Activated B cell treated with CpG ODN at 0.5 μM for 24 hours (primary cell): ENCODE measurements at regions of chr7 and their contacts with region 1.

Region 1: DNA sequence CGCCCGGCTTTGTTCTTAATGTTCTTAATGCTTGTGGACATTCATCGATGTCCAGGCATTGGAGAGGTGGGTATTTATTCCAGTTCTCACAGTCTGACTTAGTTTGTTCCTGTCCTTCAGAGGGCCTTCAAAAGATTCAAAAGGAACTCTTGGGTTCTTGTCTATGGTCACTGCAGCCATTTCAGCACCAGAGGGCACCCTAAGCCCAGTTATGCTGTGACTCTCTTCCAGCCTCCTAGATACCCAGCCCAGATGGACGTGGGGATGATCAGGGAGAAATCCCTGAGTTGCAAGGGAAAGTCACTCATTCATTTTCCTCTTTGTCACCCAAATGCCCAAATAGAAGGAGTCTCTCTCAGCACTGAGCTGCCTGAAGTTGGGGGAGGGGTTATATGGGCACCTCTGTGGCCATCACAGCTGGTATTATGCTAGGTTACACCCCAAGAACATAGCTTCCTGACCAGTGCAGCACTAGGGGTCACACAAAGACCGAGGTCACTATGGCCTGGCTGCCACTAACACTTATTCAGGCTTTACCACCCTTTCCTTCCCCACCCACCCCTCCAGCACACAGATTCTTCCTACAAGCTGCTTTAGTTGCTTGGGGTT is 26.5 kb upstream of the CCDC126 start:
- DNase-seq: peak; percentile 53
- ATAC-seq: peak; percentile 89
- H3K4me3 Mint-ChIP-seq: no peak overlapping the region
- H3K27ac Mint-ChIP-seq: no peak overlapping the region
- H3K4me1 Mint-ChIP-seq: no peaks in the 10 kb centered on the region
- H3K27me3 Mint-ChIP-seq: peaks cover 14% of the 10 kb centered on the region
- CTCF ChIP-seq: peak; percentile 29

Region 2: DNA sequence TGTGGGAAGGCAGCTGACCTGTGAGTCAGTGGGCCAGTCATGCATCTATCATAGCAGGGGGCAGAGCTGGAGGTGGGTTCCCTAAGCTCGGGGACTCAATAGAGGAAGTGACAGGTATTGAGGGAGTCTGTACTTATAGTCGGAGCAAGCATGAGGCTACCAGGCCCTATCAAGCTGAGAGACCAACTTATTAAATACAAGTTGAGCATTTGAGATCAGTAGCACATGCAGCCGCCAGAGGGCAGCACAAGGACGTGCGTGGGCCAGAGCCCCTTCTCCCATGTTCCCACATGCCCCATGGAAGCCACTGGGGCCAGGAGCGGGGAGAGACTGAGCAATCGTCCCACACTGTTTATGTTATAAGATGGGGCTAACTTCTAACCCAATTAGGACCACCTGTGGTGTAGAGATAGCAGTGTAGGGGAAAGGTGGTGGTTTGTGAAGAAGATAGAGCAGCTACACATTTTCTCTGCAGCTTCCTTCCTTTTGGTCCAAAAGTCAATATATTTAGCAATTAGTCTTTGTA is 126.3 kb after region 1 on chr7:
- CTCF ChIA-PET with region 1: interaction called, 17 read pairs
- POLR2A ChIA-PET with region 1: no interaction called
- intact Hi-C with region 1: loop called (anchors 1 kb)
- DNase-seq: peak; percentile 38
- ATAC-seq: peak; percentile 60
- H3K4me3 Mint-ChIP-seq: no peak overlapping the region
- H3K27ac Mint-ChIP-seq: no peak overlapping the region
- H3K4me1 Mint-ChIP-seq: no peaks in the 10 kb centered on the region
- H3K27me3 Mint-ChIP-seq: no peaks in the 10 kb centered on the region
- CTCF ChIP-seq: no peak

Region 3: DNA sequence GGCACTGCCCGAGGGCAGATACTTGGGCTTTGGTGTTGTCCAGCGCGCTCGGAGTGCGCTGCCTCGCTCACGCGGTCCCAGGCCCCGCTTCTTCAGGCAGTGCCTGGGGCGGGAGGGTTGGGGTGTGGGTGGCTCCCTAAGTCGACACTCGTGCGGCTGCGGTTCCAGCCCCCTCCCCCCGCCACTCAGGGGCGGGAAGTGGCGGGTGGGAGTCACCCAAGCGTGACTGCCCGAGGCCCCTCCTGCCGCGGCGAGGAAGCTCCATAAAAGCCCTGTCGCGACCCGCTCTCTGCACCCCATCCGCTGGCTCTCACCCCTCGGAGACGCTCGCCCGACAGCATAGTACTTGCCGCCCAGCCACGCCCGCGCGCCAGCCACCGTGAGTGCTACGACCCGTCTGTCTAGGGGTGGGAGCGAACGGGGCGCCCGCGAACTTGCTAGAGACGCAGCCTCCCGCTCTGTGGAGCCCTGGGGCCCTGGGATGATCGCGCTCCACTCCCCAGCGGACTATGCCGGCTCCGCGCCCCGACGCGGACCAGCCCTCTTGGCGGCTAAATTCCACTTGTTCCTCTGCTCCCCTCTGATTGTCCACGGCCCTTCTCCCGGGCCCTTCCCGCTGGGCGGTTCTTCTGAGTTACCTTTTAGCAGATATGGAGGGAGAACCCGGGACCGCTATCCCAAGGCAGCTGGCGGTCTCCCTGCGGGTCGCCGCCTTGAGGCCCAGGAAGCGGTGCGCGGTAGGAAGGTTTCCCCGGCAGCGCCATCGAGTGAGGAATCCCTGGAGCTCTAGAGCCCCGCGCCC is 713.4 kb after region 1 on chr7 and contains the start of gene NPY:
- CTCF ChIA-PET with region 1: no interaction called
- POLR2A ChIA-PET with region 1: no interaction called
- intact Hi-C with region 1: loop called (anchors 10 kb)
- DNase-seq: no peak
- ATAC-seq: peak; percentile 34
- H3K4me3 Mint-ChIP-seq: peak within 1 kb of the TSS; percentile 76
- H3K27ac Mint-ChIP-seq: no peak within 1 kb of the TSS
- H3K4me1 Mint-ChIP-seq: peaks cover 23% of the 10 kb centered on the region
- H3K27me3 Mint-ChIP-seq: peaks cover 38% of the 10 kb centered on the region
- CTCF ChIP-seq: no peak
- total RNA-seq, gene NPY: not detected in 2 replicates

Region 4: GRCh38 chr7:24587848-24588247 is 1017.2 kb after region 1 on chr7:
- CTCF ChIA-PET with region 1: no interaction called
- POLR2A ChIA-PET with region 1: no interaction called
- intact Hi-C with region 1: loop called (anchors 1 kb)
- DNase-seq: no peak
- ATAC-seq: peak; percentile 62
- H3K4me3 Mint-ChIP-seq: no peak overlapping the region
- H3K27ac Mint-ChIP-seq: no peak overlapping the region
- H3K4me1 Mint-ChIP-seq: peaks cover 14% of the 10 kb centered on the region
- H3K27me3 Mint-ChIP-seq: no peaks in the 10 kb centered on the region
- CTCF ChIP-seq: no peak